PC-3 (cell line): ENCODE measurements at regions of chr2 and their contacts with region 1.

Region 1: DNA sequence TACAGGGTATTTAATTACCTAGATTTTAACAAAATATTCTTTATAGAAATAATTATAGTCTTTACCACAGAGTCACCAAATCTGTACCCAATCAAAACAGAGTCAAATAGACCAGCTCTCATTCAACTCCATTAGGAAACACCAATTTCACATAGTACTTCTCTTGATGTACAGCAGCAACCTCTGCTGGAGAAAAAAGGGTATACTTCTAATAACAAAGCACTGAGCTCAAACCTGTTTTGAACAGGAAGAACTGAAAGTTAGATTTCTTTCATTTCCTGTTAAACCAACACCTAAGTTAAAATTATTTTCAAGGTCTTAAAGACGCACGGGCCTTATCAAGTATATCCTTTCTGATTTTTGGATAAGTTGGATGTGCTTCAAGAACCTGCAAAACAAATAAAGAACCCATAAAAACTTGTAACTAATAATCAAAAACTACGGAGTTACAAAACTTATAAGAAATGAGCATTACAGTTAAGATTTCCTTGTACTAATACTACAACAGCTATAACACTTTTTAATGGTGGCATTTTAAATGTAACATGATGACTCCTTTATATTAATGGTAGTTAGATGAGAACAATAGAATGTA is 79.0 kb downstream of the TTC21B start:
- DNase-seq: peak; percentile 93
- ATAC-seq: peak; percentile 94
- H3K4me3 ChIP-seq: peak overlapping the region; percentile 31
- H3K27ac ChIP-seq: no peak overlapping the region
- H3K4me1 ChIP-seq: peaks cover 10% of the 10 kb centered on the region
- H3K27me3 ChIP-seq: no peaks in the 10 kb centered on the region
- CTCF ChIP-seq: peak; percentile 96

Region 2: GRCh38 chr2:165239230-165239629 is 635.3 kb before region 1 on chr2 and contains the start of gene SCN2A:
- CTCF ChIA-PET with region 1: no interaction called
- POLR2A ChIA-PET with region 1: no interaction called
- intact Hi-C with region 1: loop called (anchors 1 kb)
- DNase-seq: peak; percentile 67
- ATAC-seq: peak; percentile 37
- H3K4me3 ChIP-seq: no peak within 1 kb of the TSS
- H3K27ac ChIP-seq: no peak within 1 kb of the TSS
- H3K4me1 ChIP-seq: no peaks in the 10 kb centered on the region
- H3K27me3 ChIP-seq: no peaks in the 10 kb centered on the region
- CTCF ChIP-seq: peak; percentile 74
- total RNA-seq, gene SCN2A: 0.07 and 0.46 TPM in 2 replicates

Region 3: GRCh38 chr2:165469417-165469816 is 405.1 kb before region 1 on chr2 and contains the start of gene CSRNP3:
- CTCF ChIA-PET with region 1: interaction called, 7 read pairs
- POLR2A ChIA-PET with region 1: no interaction called
- intact Hi-C with region 1: loop called (anchors 5 kb)
- DNase-seq: peak; percentile 97
- ATAC-seq: peak; percentile 100
- H3K4me3 ChIP-seq: peak within 1 kb of the TSS; percentile 73
- H3K27ac ChIP-seq: no peak within 1 kb of the TSS
- H3K4me1 ChIP-seq: peaks cover 24% of the 10 kb centered on the region; the same call in 1 of the 2 replicates
- H3K27me3 ChIP-seq: no peaks in the 10 kb centered on the region
- CTCF ChIP-seq: no peak
- total RNA-seq, gene CSRNP3: 2.2 and 8.3 TPM in 2 replicates

Region 4: DNA sequence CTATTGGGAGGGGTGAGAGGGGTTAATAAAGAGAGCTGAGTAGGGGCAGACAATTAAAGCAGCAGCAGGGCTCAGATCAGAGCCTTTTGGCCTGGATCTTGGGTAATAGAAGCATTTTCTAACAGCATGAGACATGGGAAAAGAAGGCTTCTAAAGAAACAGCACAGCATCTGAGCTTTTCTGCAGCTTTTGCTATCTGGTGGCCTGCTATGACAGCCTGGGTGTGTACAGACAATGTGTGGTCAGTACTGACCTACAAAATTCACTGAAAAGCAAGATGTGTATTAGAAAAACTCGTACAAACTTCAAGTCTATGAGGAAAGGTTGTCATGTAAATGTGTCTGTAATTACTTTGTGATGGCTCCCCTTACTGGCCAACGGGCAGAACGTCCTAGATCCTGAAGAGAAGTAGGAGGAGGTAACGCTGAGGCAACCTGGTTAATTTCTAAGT is 176.1 kb before region 1 on chr2:
- CTCF ChIA-PET with region 1: interaction called, 4 read pairs
- POLR2A ChIA-PET with region 1: no interaction called
- intact Hi-C with region 1: loop called (anchors 1 kb)
- DNase-seq: peak; percentile 80
- ATAC-seq: peak; percentile 96
- H3K4me3 ChIP-seq: no peak overlapping the region
- H3K27ac ChIP-seq: no peak overlapping the region
- H3K4me1 ChIP-seq: no peaks in the 10 kb centered on the region
- H3K27me3 ChIP-seq: 0 out of 2 replicates have a peak, but pooled peaks cover 3% of the 10 kb centered on the region
- CTCF ChIP-seq: peak; percentile 79

Region 5: DNA sequence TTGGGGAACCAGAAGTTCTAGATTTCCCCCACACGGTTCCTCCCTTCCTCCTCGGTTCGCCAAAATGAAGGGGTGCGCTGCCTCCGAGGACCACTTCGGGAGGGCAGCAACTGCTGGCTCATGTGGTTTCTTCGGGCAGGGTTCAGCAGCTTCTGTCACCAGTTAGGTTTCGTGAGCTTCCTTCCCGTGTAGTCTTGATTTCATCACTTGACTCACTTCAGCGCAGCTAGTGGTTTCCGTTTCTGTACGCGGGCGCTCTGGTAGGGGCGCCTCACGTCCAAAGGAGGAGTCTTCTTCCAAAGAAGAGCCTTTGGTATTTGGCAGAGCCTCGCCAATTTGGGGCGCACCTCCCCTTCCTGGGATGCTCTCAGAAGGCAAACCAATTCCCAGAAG is 80.0 kb before region 1 on chr2:
- CTCF ChIA-PET with region 1: interaction called, 24 read pairs
- POLR2A ChIA-PET with region 1: no interaction called
- intact Hi-C with region 1: loop called (anchors 1 kb)
- DNase-seq: peak; percentile 82
- ATAC-seq: peak; percentile 54
- H3K4me3 ChIP-seq: peak overlapping the region; percentile 81
- H3K27ac ChIP-seq: peak overlapping the region; percentile 80
- H3K4me1 ChIP-seq: peaks cover 42% of the 10 kb centered on the region
- H3K27me3 ChIP-seq: no peaks in the 10 kb centered on the region
- CTCF ChIP-seq: peak; percentile 24; the same call in 1 of the 2 replicates